B cell (primary cell): ENCODE measurements at regions of chr4 and their contacts with region 1.

Region 1: GRCh38 chr4:85784947-85785346 is 310.0 kb downstream of the ARHGAP24 start:
- DNase-seq: no peak
- ATAC-seq: no peak
- H3K4me3 ChIP-seq: no peak overlapping the region
- H3K4me3 Mint-ChIP-seq: no peak overlapping the region
- H3K27ac ChIP-seq: no peak overlapping the region
- H3K27ac Mint-ChIP-seq: no peak overlapping the region
- H3K4me1 ChIP-seq: peaks cover 19 to 26% of the 10 kb centered on the region in 2 donors
- H3K4me1 Mint-ChIP-seq: peaks cover 42% of the 10 kb centered on the region
- H3K27me3 ChIP-seq: no peaks in the 10 kb centered on the region
- H3K27me3 Mint-ChIP-seq: no peaks in the 10 kb centered on the region
- CTCF ChIP-seq: no peak

Region 2: GRCh38 chr4:85756938-85757337 is 28.0 kb before region 1 on chr4:
- CTCF ChIA-PET with region 1: no interaction called
- POLR2A ChIA-PET with region 1: no interaction called
- intact Hi-C with region 1: no loop called
- DNase-seq: no peak
- ATAC-seq: peak; percentile 36
- H3K4me3 ChIP-seq: no peak overlapping the region
- H3K4me3 Mint-ChIP-seq: no peak overlapping the region
- H3K27ac ChIP-seq: no peak overlapping the region
- H3K27ac Mint-ChIP-seq: no peak overlapping the region
- H3K4me1 ChIP-seq: peaks cover 0 to 7% of the 10 kb centered on the region in 2 donors
- H3K4me1 Mint-ChIP-seq: peaks cover 14% of the 10 kb centered on the region
- H3K27me3 ChIP-seq: no peaks in the 10 kb centered on the region
- H3K27me3 Mint-ChIP-seq: no peaks in the 10 kb centered on the region
- CTCF ChIP-seq: peak; percentile 31

Region 3: DNA sequence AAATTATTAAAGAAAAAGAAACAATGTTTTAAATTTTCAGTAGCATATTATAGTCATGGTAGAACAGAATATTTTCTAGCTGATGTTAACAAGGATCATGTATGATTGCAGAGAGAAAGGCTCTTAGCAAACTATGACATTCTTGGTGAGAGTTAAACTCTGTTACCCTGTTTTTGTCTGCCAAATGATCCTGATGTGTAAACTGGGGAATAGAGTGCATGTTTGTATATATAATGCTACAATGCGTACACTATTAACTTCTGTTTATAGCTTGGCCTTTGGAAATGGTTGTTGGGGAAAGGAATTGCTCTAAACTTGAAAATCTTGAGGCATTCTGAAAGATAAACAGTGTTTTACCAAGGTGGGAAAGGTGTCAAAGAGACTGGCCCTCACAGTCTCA is 17.3 kb before region 1 on chr4:
- CTCF ChIA-PET with region 1: interaction called, 3 read pairs
- POLR2A ChIA-PET with region 1: no interaction called
- intact Hi-C with region 1: loop called (anchors 2 kb)
- DNase-seq: no peak
- ATAC-seq: no peak
- H3K4me3 ChIP-seq: no peak overlapping the region
- H3K4me3 Mint-ChIP-seq: no peak overlapping the region
- H3K27ac ChIP-seq: no peak overlapping the region
- H3K27ac Mint-ChIP-seq: no peak overlapping the region
- H3K4me1 ChIP-seq: peaks cover 0 to 5% of the 10 kb centered on the region in 2 donors
- H3K4me1 Mint-ChIP-seq: peaks cover 10% of the 10 kb centered on the region
- H3K27me3 ChIP-seq: no peaks in the 10 kb centered on the region
- H3K27me3 Mint-ChIP-seq: no peaks in the 10 kb centered on the region
- CTCF ChIP-seq: no peak

Region 4: GRCh38 chr4:85909851-85910250 is 124.9 kb after region 1 on chr4:
- CTCF ChIA-PET with region 1: no interaction called
- POLR2A ChIA-PET with region 1: no interaction called
- intact Hi-C with region 1: no loop called
- DNase-seq: no peak
- ATAC-seq: no peak
- H3K4me3 ChIP-seq: no peak overlapping the region
- H3K4me3 Mint-ChIP-seq: no peak overlapping the region
- H3K27ac ChIP-seq: no peak overlapping the region
- H3K27ac Mint-ChIP-seq: no peak overlapping the region
- H3K4me1 ChIP-seq: peaks cover 0 to 10% of the 10 kb centered on the region in 2 donors
- H3K4me1 Mint-ChIP-seq: peaks cover 11% of the 10 kb centered on the region
- H3K27me3 ChIP-seq: no peaks in the 10 kb centered on the region
- H3K27me3 Mint-ChIP-seq: no peaks in the 10 kb centered on the region
- CTCF ChIP-seq: no peak

Region 5: DNA sequence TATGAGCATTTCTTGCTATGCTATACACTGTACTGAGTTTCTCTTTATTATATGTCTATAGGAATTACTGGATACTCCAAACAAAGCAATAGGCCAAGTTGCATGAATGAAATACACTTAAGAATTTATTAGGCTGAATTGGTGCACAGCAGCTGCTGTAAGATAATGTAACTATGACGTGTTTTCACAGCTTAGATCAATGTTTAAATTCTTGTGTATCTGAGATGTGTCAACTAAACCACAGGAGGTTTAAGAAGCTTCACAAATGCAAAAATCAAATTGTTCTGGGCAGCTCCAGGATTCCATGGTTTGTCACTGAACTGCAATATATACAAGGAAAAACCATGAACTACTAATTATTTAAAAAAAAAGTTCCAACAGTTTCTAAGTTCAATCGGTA is 418.2 kb after region 1 on chr4:
- CTCF ChIA-PET with region 1: no interaction called
- POLR2A ChIA-PET with region 1: no interaction called
- intact Hi-C with region 1: no loop called
- DNase-seq: no peak
- ATAC-seq: no peak
- H3K4me3 ChIP-seq: no peak overlapping the region
- H3K4me3 Mint-ChIP-seq: no peak overlapping the region
- H3K27ac ChIP-seq: no peak overlapping the region
- H3K27ac Mint-ChIP-seq: no peak overlapping the region
- H3K4me1 ChIP-seq: no peaks in the 10 kb centered on the region
- H3K4me1 Mint-ChIP-seq: no peaks in the 10 kb centered on the region
- H3K27me3 ChIP-seq: no peaks in the 10 kb centered on the region
- H3K27me3 Mint-ChIP-seq: no peaks in the 10 kb centered on the region
- CTCF ChIP-seq: no peak